GM12878 (cell line): ENCODE measurements at regions of chr2 and their contacts with region 1.

Region 1: DNA sequence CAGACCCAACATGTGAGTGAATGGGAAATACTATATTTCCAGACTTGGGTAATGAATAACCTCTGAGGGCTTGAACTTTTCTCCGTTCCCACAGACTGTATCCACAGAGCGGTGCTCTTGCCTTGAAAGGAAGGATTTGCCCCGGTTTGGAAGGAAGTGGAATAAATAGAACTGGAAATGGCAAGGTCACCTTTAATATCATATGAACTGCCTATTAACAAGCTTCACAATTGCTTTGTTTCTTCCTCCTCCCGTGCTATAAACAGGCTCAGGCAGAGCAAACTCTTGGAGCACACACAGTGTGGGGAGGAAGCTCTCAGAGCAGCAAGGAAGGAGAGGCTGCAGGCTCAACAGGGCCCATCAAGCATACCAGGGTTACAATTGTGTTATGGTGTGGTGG is 28.5 kb upstream of the DARS1 start:
- DNase-seq: no peak
- ATAC-seq: no peak
- H3K4me3 ChIP-seq: no peak overlapping the region
- H3K27ac ChIP-seq: no peak overlapping the region
- H3K4me1 ChIP-seq: peaks cover 3% of the 10 kb centered on the region; the same call in 1 of the 2 replicates
- H3K27me3 ChIP-seq: no peaks in the 10 kb centered on the region
- CTCF ChIP-seq: no peak
- EP300 ChIP-seq: no peak
- POLR2A ChIP-seq: no peak
- RAD21 ChIP-seq: no peak

Region 2: GRCh38 chr2:136025057-136025973 is 11.4 kb after region 1 on chr2:
- CTCF ChIA-PET with region 1: interaction called, 29 read pairs
- POLR2A ChIA-PET with region 1: interaction called, 13 read pairs
- RAD21 ChIA-PET with region 1: interaction called, 50 read pairs
- SMC1A ChIA-PET with region 1: interaction called, 152 read pairs
- in situ Hi-C with region 1: no loop called
- intact Hi-C with region 1: no loop called
- DNase-seq: no peak
- ATAC-seq: peak; percentile 68
- H3K4me3 ChIP-seq: no peak overlapping the region
- H3K27ac ChIP-seq: no peak overlapping the region
- H3K4me1 ChIP-seq: peaks cover 7% of the 10 kb centered on the region; the same call in 1 of the 2 replicates
- H3K27me3 ChIP-seq: no peaks in the 10 kb centered on the region
- CTCF ChIP-seq: no peak
- EP300 ChIP-seq: no peak
- POLR2A ChIP-seq: no peak
- RAD21 ChIP-seq: no peak

Region 3: GRCh38 chr2:136168720-136169119 is 154.8 kb after region 1 on chr2:
- CTCF ChIA-PET with region 1: no interaction called
- POLR2A ChIA-PET with region 1: no interaction called
- RAD21 ChIA-PET with region 1: no interaction called
- SMC1A ChIA-PET with region 1: no interaction called
- in situ Hi-C with region 1: no loop called
- intact Hi-C with region 1: no loop called
- DNase-seq: no peak
- ATAC-seq: no peak
- H3K4me3 ChIP-seq: no peak overlapping the region
- H3K27ac ChIP-seq: no peak overlapping the region
- H3K4me1 ChIP-seq: no peaks in the 10 kb centered on the region
- H3K27me3 ChIP-seq: peaks cover 0 to 8% of the 10 kb centered on the region in 2 experiments; a peak in 2 of 4 replicates
- CTCF ChIP-seq: no peak
- EP300 ChIP-seq: no peak
- POLR2A ChIP-seq: no peak
- RAD21 ChIP-seq: no peak

Region 4: DNA sequence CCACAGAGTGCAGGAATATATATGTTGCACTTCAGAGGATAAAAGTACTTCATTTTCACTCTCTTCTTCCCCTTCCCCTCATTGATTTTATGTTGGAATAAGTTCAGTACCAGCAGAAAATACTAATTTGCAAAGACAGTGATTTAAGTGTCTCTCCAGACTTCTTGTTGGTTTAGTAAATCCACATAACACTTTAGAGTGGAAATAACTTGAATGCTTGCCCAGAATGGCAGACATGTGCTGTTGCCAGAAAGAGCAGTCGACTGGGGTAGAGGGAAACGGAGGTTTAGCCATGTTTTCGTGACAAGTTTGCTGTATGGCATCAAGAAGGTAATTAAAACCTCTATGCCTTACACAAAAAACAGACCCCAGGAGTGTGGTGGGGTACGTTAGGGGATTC is 349.9 kb after region 1 on chr2:
- CTCF ChIA-PET with region 1: no interaction called
- POLR2A ChIA-PET with region 1: no interaction called
- RAD21 ChIA-PET with region 1: no interaction called
- SMC1A ChIA-PET with region 1: no interaction called
- in situ Hi-C with region 1: no loop called
- intact Hi-C with region 1: no loop called
- DNase-seq: no peak
- ATAC-seq: no peak
- H3K4me3 ChIP-seq: no peak overlapping the region
- H3K27ac ChIP-seq: no peak overlapping the region
- H3K4me1 ChIP-seq: peaks cover 6% of the 10 kb centered on the region
- H3K27me3 ChIP-seq: no peaks in the 10 kb centered on the region; a peak in 1 of 4 replicates
- CTCF ChIP-seq: no peak
- EP300 ChIP-seq: no peak
- POLR2A ChIP-seq: no peak
- RAD21 ChIP-seq: no peak